Common myeloid progenitor, CD34-positive (primary cell): ENCODE measurements at regions of chr12 and their contacts with region 1.

Region 1: GRCh38 chr12:546921-547845 is 87.4 kb downstream of the B4GALNT3 start:
- DNase-seq: peak; percentile 55 to 69 (median 67)
- H3K4me3 ChIP-seq: no peak overlapping the region
- H3K27ac ChIP-seq: no peak overlapping the region
- H3K4me1 ChIP-seq: peaks cover 0 to 14% (median 5%) of the 10 kb centered on the region in 4 experiments
- H3K27me3 ChIP-seq: peaks cover 0 to 31% (median 5%) of the 10 kb centered on the region in 5 experiments

Region 2: GRCh38 chr12:442235-442884 is 104.8 kb before region 1 on chr12:
- CTCF ChIA-PET with region 1: interaction called, 132 read pairs
- POLR2A ChIA-PET with region 1: interaction called, 3 read pairs
- DNase-seq: peak; percentile 34 to 57 (median 47)
- H3K4me3 ChIP-seq: no peak overlapping the region
- H3K27ac ChIP-seq: no peak overlapping the region
- H3K4me1 ChIP-seq: no peaks in the 10 kb centered on the region
- H3K27me3 ChIP-seq: peaks cover 0 to 2% (median 0%) of the 10 kb centered on the region in 5 experiments

Region 3: GRCh38 chr12:452667-453210 is 94.4 kb before region 1 on chr12:
- CTCF ChIA-PET with region 1: interaction called, 132 read pairs
- POLR2A ChIA-PET with region 1: no interaction called
- DNase-seq: no peak
- H3K4me3 ChIP-seq: no peak overlapping the region
- H3K27ac ChIP-seq: no peak overlapping the region
- H3K4me1 ChIP-seq: no peaks in the 10 kb centered on the region
- H3K27me3 ChIP-seq: peaks cover 0 to 45% (median 14%) of the 10 kb centered on the region in 5 experiments

Region 4: DNA sequence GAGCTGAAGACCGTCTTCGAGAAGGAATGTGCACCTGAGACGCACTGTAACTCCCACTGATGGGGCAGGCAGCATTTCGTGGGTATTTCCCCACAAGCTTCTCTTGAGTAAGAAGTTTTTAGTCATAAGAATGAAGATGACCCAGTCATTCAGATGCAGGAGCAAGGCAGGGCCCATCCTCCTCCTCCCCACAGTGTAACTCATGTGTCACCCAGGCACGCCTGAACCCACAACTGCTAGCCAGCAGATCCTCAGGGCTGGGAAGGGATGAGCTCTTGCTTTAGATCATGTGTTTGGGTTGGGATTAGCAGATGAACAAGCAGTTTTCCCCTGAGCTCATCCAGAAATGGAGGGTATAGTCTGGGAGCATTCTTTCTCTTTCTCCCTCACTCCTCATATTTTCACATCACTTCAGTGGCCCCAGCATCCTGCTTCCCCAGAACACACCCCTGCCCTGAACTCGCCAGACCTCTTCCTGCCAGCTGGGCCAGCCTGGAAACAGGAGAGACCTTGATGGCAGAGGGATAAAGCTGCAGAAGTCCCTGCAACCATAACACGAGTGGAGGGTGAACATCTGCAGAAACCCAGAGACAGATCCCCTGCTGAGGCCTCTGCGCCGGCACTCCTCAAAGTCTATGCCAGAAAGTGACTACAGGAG is 14.1 kb before region 1 on chr12:
- CTCF ChIA-PET with region 1: interaction called, 15 read pairs
- POLR2A ChIA-PET with region 1: no interaction called
- DNase-seq: no peak
- H3K4me3 ChIP-seq: no peak overlapping the region
- H3K27ac ChIP-seq: no peak overlapping the region
- H3K4me1 ChIP-seq: no peaks in the 10 kb centered on the region
- H3K27me3 ChIP-seq: peaks cover 0 to 8% (median 0%) of the 10 kb centered on the region in 5 experiments

Region 5: DNA sequence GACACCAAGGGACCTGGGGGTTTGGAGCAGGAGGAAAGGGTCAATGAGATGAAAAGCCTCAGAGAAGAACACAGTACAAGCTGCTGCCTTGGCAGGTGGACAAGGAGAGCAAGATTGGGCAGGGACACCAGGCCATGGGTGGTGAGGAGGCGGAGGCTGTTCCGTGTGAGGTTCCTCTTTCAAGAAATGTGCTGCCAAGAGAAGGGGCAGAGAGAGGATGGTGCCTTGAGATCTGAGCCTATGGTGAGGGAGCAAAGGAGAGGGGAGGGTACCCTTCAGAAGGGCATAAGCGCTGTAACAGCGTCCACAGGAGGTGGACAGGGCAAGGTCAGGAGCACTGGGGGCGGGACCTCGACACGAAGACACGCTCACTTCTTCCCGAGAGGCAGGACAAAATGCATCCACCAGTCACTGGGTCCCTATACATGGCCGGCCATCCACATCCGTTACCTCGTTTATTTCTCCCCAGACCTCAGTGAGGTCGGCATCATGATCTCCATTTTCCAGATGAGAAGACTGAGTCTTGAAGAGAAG is 12.8 kb after region 1 on chr12:
- CTCF ChIA-PET with region 1: interaction called, 15 read pairs
- POLR2A ChIA-PET with region 1: no interaction called
- DNase-seq: peak in 2 of 3 donors; percentile 53 to 58
- H3K4me3 ChIP-seq: no peak overlapping the region
- H3K27ac ChIP-seq: no peak overlapping the region
- H3K4me1 ChIP-seq: peaks cover 10 to 57% (median 35%) of the 10 kb centered on the region in 4 experiments
- H3K27me3 ChIP-seq: no peaks in the 10 kb centered on the region